ENCODE measurements at regions of chr6 and their contacts with region 1.

Region 1: GRCh38 chr6:6547110-6547879 is 41.2 kb upstream of the LY86 start:
- DNase-seq: peak; percentile 89 to 98
- H3K4me3 ChIP-seq: no peak overlapping the region
- CTCF ChIP-seq: peak in 1 of 3 donors; percentile 94
- POLR2A ChIP-seq: no peak

Region 2: DNA sequence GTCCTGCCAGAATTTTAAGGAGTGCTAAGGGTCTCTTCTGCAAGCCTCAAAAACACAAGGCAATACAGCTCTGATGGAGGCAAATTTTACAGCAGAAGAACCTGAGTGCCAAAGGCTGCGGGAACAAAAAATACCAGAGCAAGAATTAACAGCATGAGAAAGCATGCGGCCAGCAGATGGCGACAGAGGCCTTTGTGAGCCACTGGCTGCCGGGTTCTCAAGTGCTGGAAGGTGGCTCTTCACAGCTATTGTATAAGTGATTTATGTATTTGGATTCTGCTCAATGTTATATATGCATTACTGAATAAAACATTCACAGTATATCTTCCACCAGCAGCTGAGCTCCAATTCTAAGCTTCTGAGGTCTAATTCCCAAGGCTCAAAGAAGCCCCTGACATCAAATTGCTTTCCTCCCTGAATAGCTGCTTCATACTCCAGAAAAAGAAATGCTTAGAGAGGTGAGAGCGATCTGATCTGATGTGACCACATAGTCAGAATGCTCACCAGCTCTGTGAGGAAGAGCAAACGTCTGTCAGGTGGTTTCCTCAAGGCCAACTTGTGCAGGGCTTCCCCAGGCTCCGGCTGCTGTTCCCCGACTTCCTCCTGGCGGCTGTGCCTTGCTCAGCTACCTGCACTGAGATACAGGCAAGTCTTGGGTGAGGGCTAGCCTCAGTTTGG is 1403.5 kb before region 1 on chr6:
- intact Hi-C with region 1: loop called (anchors 5 kb)
- DNase-seq: peak; percentile 85 to 96
- H3K4me3 ChIP-seq: no peak overlapping the region
- CTCF ChIP-seq: peak in 1 of 3 donors; percentile 55
- POLR2A ChIP-seq: no peak

Region 3: DNA sequence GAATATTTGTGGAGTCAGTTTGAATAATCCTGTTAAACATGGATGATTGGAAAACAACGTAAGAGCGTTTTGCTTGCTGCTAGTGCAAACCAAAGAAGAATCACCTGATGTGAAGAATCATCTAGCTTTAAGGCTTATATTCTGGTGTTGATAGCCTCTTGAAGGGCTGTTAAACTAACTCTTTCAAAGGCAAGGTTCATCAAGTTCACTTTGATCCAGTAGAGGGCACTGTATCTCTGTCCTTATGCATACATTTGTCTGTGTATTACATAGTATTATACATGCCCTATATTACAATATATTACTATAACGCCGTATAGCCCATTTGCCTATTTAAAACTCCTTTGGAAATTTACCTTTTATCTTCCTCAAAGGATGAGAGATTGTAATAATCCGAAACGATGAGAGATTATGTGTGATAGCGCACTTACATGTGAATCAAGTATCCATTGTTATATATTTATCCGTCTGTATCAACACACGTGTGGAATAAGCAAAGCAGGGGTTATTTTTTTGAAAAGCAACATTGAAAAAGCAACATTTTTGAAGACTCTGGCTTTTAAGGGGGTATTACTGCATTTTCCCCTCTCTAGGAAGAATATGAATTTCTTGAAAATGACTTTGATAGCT is 489.8 kb before region 1 on chr6:
- intact Hi-C with region 1: loop called (anchors 10 kb)
- DNase-seq: peak in 1 of 2 donors; percentile 17
- H3K4me3 ChIP-seq: no peak overlapping the region
- CTCF ChIP-seq: no peak
- POLR2A ChIP-seq: no peak

Region 4: GRCh38 chr6:7628479-7628878 is 1081.2 kb after region 1 on chr6:
- intact Hi-C with region 1: no loop called
- DNase-seq: no peak
- H3K4me3 ChIP-seq: no peak overlapping the region
- CTCF ChIP-seq: no peak
- POLR2A ChIP-seq: no peak

Measured in lower leg skin (tissue), 4 donors.